Calu3 (cell line): ENCODE measurements at regions of chr3 and their contacts with region 1.

Region 1: GRCh38 chr3:188819939-188820338 is 351.8 kb upstream of the TPRG1 start:
- DNase-seq: no peak
- H3K4me3 Mint-ChIP-seq: no peak overlapping the region
- H3K27ac Mint-ChIP-seq: no peak overlapping the region
- H3K4me1 Mint-ChIP-seq: peaks cover 30% of the 10 kb centered on the region
- H3K27me3 Mint-ChIP-seq: no peaks in the 10 kb centered on the region
- CTCF ChIP-seq: no peak

Region 2: DNA sequence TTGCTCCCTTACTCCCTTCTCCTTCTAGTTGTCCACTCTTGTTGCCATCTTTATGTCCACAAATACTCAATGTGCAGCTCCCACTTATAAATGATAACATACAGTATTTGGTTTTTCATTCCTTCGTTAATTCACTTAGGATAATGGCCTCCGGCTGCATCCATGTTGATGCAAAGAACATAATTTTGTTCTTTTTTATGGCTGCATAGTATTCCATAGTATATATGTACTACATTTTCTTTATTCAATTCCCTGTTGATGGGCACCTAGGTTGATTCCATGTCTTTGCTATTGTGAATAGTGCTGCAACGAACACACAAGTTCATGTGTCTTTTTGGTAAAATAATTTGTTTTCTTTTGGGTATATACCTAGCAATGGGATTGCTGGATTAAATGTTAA is 1322.1 kb after region 1 on chr3:
- CTCF ChIA-PET with region 1: no interaction called
- intact Hi-C with region 1: loop called (anchors 10 kb)
- DNase-seq: no peak
- H3K4me3 Mint-ChIP-seq: no peak overlapping the region
- H3K27ac Mint-ChIP-seq: no peak overlapping the region
- H3K4me1 Mint-ChIP-seq: peaks cover 9% of the 10 kb centered on the region
- H3K27me3 Mint-ChIP-seq: no peaks in the 10 kb centered on the region
- CTCF ChIP-seq: no peak